GM18951 (cell line): ENCODE measurements at regions of chr15 and their contacts with region 1.

Region 1: GRCh38 chr15:40852291-40852928 is 8.6 kb downstream of the SPINT1 start:
- POLR2A ChIP-seq: no peak

Region 2: DNA sequence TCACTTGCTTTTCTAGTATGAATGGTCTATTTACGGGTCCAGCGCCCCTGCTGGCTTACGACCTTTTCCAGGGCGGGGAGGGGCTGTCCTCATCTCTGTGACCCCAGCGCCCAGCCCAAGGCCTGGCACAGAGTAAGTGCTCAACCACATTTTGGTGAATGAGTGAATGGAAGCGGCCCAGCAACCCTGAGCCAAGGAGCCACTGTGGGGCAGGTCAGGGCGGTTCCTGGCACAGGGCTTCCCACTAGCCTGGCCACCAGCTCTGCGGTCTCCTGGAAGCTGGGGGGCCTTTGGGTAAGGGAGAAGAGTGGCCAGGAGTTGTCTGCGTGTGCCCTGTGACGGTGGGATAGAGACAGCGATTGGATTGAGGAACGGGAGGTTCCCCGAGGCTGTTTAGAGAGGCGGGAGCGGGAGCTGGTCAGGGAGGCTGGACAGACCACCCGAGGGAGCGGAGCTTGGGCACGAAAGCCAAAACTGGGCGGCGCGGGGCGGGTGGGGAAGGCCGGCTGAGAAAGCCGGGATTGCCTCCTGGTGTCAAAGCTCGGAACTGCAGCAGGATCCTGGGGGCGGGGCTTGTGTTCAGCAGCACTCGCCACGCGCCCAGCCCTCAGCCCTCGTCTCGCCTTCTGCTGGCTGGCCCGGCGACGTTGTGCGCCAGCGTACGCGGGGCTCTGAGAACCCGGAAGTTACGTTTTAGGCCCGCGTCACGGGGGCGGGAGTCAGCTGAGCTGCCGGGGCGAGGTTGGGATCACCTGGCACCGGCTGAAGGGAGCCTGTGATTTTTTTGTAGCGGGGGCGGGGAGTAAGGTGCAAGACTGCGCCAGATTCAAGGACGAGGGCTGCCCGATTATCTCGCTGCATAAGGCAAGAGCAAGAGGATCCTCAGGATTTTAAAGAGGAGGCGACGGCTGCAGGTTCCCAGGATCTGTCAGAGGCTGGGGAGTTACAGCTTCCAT is 41.6 kb after region 1 on chr15 and contains the start of gene VPS18:
- in situ Hi-C with region 1: loop called (anchors 5 kb)
- POLR2A ChIP-seq: peak; percentile 73